ENCODE measurements at regions of chr5 and their contacts with region 1.

Region 1: DNA sequence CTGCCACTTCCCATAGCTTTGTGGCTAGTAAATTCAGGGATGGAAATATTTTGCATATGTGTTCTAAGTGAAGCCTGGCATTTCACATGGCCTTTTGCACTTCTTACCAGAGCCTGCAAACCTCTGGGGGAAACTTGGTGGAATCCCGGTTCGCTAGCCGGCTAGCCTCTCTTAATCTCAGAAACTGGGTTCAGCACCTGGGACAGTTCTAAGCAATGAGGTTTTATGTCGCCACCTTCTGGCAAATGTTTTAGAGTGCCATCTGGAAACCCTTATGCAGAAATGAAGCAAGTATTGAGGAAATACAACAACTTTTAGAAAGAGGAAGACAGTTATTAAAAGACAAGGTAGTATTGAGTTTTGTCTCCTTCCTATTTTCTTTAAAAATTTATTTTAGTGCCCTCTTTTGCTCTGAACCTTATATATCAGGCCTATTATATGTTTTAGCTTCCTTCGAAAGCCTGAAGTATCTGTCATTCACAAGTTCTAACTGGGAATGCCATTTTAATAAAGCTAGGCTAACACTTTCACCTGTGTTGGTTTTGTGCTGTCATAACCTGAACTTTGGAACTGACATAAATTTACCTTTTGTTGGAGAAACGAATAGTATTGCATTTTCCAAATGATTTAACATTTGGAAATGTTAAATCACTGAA is 963 bp upstream of the HTR1A start:
- DNase-seq: peak; percentile 54
- H3K4me3 ChIP-seq: no peak overlapping the region
- H3K27ac ChIP-seq: no peak overlapping the region
- H3K4me1 ChIP-seq: no peaks in the 10 kb centered on the region
- H3K27me3 ChIP-seq: peaks cover 5 to 25% of the 10 kb centered on the region in 2 experiments
- CTCF ChIP-seq: peak; percentile 63 to 73
- POLR2A ChIP-seq: no peak

Region 2: GRCh38 chr5:62450259-62450658 is 1512.9 kb before region 1 on chr5:
- CTCF ChIA-PET with region 1: interaction called, 3 read pairs
- POLR2A ChIA-PET with region 1: no interaction called
- dilution Hi-C with region 1: no loop called
- intact Hi-C with region 1: loop called (anchors 10 kb)
- DNase-seq: no peak
- H3K4me3 ChIP-seq: no peak overlapping the region
- H3K27ac ChIP-seq: no peak overlapping the region
- H3K4me1 ChIP-seq: no peaks in the 10 kb centered on the region
- H3K27me3 ChIP-seq: no peaks in the 10 kb centered on the region
- CTCF ChIP-seq: no peak
- POLR2A ChIP-seq: no peak

Region 3: DNA sequence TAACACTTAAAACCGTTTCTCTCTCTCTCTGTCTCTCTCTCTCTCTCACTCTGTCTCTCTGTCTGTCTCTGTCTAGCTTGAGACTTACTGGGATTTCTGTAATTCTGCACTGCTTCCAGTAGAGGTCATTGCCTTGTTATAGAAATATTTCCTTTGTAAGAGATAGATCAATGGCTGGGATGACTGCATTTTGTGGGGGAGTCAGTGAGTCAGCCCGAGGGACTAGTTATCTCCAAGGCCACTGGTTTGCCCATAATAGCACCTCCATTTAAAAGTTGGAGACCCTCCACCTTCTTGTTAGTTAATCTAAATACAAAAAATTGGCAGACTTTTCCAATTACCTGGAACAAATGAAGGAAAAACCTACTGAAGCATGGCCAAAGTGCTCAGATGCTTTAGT is 837.3 kb before region 1 on chr5:
- CTCF ChIA-PET with region 1: interaction called, 15 read pairs
- POLR2A ChIA-PET with region 1: no interaction called
- dilution Hi-C with region 1: no loop called
- intact Hi-C with region 1: loop called (anchors 1 kb)
- DNase-seq: peak; percentile 26
- H3K4me3 ChIP-seq: no peak overlapping the region
- H3K27ac ChIP-seq: no peak overlapping the region
- H3K4me1 ChIP-seq: no peaks in the 10 kb centered on the region
- H3K27me3 ChIP-seq: no peaks in the 10 kb centered on the region
- CTCF ChIP-seq: peak; percentile 24 to 40
- POLR2A ChIP-seq: no peak

Region 4: GRCh38 chr5:63401436-63402046 is 561.7 kb before region 1 on chr5:
- CTCF ChIA-PET with region 1: interaction called, 4 read pairs
- POLR2A ChIA-PET with region 1: no interaction called
- dilution Hi-C with region 1: no loop called
- intact Hi-C with region 1: loop called (anchors 1 kb)
- DNase-seq: peak; percentile 44
- H3K4me3 ChIP-seq: no peak overlapping the region
- H3K27ac ChIP-seq: no peak overlapping the region
- H3K4me1 ChIP-seq: no peaks in the 10 kb centered on the region
- H3K27me3 ChIP-seq: no peaks in the 10 kb centered on the region
- CTCF ChIP-seq: peak; percentile 62 to 63
- POLR2A ChIP-seq: no peak

Region 5: GRCh38 chr5:64207978-64208377 is 244.8 kb after region 1 on chr5:
- CTCF ChIA-PET with region 1: no interaction called
- POLR2A ChIA-PET with region 1: no interaction called
- dilution Hi-C with region 1: no loop called
- intact Hi-C with region 1: loop called (anchors 5 kb)
- DNase-seq: peak; percentile 40
- H3K4me3 ChIP-seq: no peak overlapping the region
- H3K27ac ChIP-seq: no peak overlapping the region
- H3K4me1 ChIP-seq: peaks cover 16% of the 10 kb centered on the region
- H3K27me3 ChIP-seq: no peaks in the 10 kb centered on the region
- CTCF ChIP-seq: no peak
- POLR2A ChIP-seq: no peak